Ovary (tissue), 10 donors: ENCODE measurements at regions of chr5 and their contacts with region 1.

Region 1: GRCh38 chr5:131634996-131635754 is at the start of gene RAPGEF6:
- DNase-seq: peak; percentile 97 to 99 (median 98)
- H3K4me3 ChIP-seq: peak within 1 kb of the TSS; percentile 88
- H3K27ac ChIP-seq: peak within 1 kb of the TSS; percentile 81 to 95
- H3K4me1 ChIP-seq: peaks cover 2% of the 10 kb centered on the region
- H3K27me3 ChIP-seq: no peaks in the 10 kb centered on the region
- CTCF ChIP-seq: no peak
- EP300 ChIP-seq: no peak
- POLR2A ChIP-seq: peak; percentile 61
- total RNA-seq, gene RAPGEF6: 15.6 to 25.8 (median 19.2) TPM

Region 2: GRCh38 chr5:131796793-131797693 is 161.9 kb after region 1 on chr5 and contains the start of gene FNIP1:
- intact Hi-C with region 1: loop called in 1 of 4 experiments (anchors 2 kb)
- DNase-seq: peak; percentile 99 to 100 (median 99)
- H3K4me3 ChIP-seq: peak within 1 kb of the TSS; percentile 96
- H3K27ac ChIP-seq: peak within 1 kb of the TSS; percentile 97 to 99
- H3K4me1 ChIP-seq: peaks cover 5% of the 10 kb centered on the region
- H3K27me3 ChIP-seq: no peaks in the 10 kb centered on the region
- CTCF ChIP-seq: no peak
- EP300 ChIP-seq: peak; percentile 46
- POLR2A ChIP-seq: peak; percentile 90
- total RNA-seq, gene FNIP1: 37.2 to 52.7 (median 42.4) TPM

Region 3: DNA sequence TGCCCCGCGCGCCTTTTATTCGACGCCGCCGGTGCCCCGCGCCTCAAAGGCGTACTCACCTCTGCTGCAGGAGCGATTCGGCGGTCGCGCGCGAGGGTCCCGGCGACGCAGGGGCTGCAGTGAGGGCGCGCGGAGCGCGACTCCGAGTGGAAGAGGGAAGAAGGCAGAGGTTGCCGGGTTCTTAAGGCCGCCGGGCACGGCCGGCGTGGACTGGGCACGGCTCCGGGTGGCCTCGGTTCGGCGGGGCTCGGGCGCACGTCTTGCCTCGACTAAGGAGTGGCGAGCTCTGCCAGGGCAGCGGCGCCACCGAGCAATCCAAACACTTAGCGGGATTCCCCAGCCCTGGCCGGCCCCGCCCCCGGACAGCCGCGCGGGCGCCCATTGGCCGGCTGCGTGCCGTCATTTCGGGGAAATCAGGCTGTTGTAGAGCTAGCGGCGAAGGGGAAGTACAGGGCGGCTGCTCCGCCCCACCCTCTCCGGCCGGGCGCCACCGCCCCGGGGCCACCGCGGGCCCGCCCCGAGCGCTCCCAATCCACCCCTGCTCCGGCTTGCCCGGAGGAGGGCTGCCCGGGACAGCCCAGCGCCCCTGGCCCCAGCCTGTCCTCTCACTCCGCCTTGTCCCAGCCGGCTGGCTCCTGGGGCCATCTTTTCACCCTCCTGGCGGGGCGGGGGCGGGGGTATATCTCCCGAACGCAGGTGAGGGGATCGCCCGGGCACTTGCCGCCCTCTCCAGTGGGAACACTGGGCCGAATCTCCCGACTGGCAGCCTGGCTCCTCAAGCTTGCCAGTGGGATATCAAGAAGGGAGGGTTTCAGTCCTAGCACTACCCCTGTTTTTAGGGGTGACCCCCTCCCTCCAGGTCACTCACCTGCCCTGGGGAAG is 855.6 kb after region 1 on chr5 and contains the start of gene IRF1:
- intact Hi-C with region 1: loop called in 1 of 4 experiments (anchors 10 kb)
- DNase-seq: peak; percentile 95 to 97 (median 97)
- H3K4me3 ChIP-seq: peak within 1 kb of the TSS; percentile 93
- H3K27ac ChIP-seq: peak within 1 kb of the TSS; percentile 86 to 95
- H3K4me1 ChIP-seq: peaks cover 16% of the 10 kb centered on the region
- H3K27me3 ChIP-seq: no peaks in the 10 kb centered on the region
- CTCF ChIP-seq: peak in 1 of 3 donors; percentile 31
- EP300 ChIP-seq: peak; percentile 75
- POLR2A ChIP-seq: peak; percentile 90
- total RNA-seq, gene IRF1: 17.3 to 126 (median 31.1) TPM